Endothelial cell of umbilical vein (primary cell): ENCODE measurements at regions of chr20 and their contacts with region 1.

Region 1: DNA sequence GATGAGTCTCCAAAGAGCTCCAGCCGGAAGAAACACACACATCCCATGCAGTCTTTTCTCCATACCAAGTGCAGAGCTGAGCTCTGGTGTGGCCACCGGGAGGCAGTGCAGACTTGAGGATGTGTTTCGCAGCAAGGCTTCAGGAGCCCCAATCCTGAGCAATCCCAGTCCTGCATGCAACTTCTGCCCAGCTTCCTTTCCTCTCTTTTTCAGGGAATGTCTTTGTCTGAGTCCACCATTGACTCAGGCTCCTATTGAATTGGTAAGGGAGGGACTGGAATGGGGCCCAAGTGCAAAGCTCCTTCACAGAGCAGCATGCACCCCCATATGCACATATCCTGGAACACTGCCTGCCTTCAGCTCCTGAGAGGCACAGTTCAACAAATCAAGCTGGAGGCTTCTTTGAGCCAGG is 50.5 kb upstream of the ASIP start:
- DNase-seq: peak; percentile 82
- H3K4me3 ChIP-seq: no peak overlapping the region
- H3K27ac ChIP-seq: no peak overlapping the region
- H3K4me1 ChIP-seq: no peaks in the 10 kb centered on the region
- H3K27me3 ChIP-seq: peaks cover 37 to 44% of the 10 kb centered on the region in 2 experiments
- CTCF ChIP-seq: peak; percentile 86 to 88
- POLR2A ChIP-seq: no peak

Region 2: GRCh38 chr20:34010405-34010931 is 180.2 kb before region 1 on chr20:
- CTCF ChIA-PET with region 1: no interaction called
- POLR2A ChIA-PET with region 1: no interaction called
- dilution Hi-C with region 1: no loop called
- intact Hi-C with region 1: no loop called
- DNase-seq: no peak
- H3K4me3 ChIP-seq: no peak overlapping the region
- H3K27ac ChIP-seq: no peak overlapping the region
- H3K4me1 ChIP-seq: peaks cover 3% of the 10 kb centered on the region
- H3K27me3 ChIP-seq: no peaks in the 10 kb centered on the region
- CTCF ChIP-seq: no peak
- POLR2A ChIP-seq: no peak

Region 3: GRCh38 chr20:34246126-34246626 is 55.5 kb after region 1 on chr20:
- CTCF ChIA-PET with region 1: interaction called, 10 read pairs
- POLR2A ChIA-PET with region 1: no interaction called
- dilution Hi-C with region 1: no loop called
- intact Hi-C with region 1: no loop called
- DNase-seq: no peak
- H3K4me3 ChIP-seq: no peak overlapping the region
- H3K27ac ChIP-seq: no peak overlapping the region
- H3K4me1 ChIP-seq: no peaks in the 10 kb centered on the region
- H3K27me3 ChIP-seq: peaks cover 12 to 13% of the 10 kb centered on the region in 2 experiments
- CTCF ChIP-seq: no peak
- POLR2A ChIP-seq: no peak

Region 4: DNA sequence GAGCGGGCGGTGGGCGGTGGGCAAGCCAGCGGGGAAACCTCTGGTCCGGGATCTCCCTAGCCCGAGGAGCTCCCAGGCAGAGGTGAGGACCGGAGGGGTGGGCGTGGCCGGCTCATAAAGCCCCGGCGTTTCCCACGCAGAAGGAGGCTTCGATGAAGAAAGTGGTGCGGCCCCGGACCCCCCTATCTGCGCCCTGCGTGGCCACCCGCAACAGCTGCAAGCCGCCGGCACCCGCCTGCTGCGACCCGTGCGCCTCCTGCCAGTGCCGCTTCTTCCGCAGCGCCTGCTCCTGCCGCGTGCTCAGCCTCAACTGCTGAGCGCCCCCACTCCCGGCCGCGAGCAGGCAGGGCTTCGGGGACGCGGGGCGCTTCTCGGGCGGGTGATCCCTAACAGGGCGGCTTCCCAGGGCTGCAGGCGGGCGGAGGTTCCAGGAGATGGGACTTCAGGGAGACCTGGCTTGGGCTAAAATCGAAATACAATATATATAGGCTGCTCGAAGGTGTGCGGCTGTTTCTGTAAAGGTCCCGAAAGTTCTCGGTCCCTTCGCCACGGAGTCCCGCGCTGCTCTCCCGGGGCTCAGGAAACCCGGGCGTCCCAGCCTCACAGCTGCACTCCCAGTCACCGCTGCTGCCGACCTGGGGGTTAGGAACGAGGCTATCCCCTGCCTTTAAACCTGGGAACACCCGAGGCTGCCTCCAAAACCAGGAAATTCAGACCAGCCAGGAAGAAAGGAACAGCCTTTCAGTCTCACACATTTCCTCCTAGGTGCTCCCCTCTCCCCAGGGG is 78.4 kb after region 1 on chr20:
- CTCF ChIA-PET with region 1: interaction called, 19 read pairs
- POLR2A ChIA-PET with region 1: no interaction called
- dilution Hi-C with region 1: no loop called
- intact Hi-C with region 1: loop called (anchors 1 kb)
- DNase-seq: peak; percentile 39
- H3K4me3 ChIP-seq: peak overlapping the region; percentile 26 to 51 (median 28)
- H3K27ac ChIP-seq: no peak overlapping the region
- H3K4me1 ChIP-seq: peaks cover 5% of the 10 kb centered on the region
- H3K27me3 ChIP-seq: no peaks in the 10 kb centered on the region
- CTCF ChIP-seq: no peak
- POLR2A ChIP-seq: no peak

Region 5: GRCh38 chr20:34302723-34303528 is 112.2 kb after region 1 on chr20 and contains the start of gene AHCY:
- CTCF ChIA-PET with region 1: interaction called, 18 read pairs
- POLR2A ChIA-PET with region 1: no interaction called
- dilution Hi-C with region 1: no loop called
- intact Hi-C with region 1: loop called (anchors 2 kb)
- DNase-seq: peak; percentile 96
- H3K4me3 ChIP-seq: peak within 1 kb of the TSS; percentile 84 to 94 (median 85)
- H3K27ac ChIP-seq: peak within 1 kb of the TSS; percentile 83
- H3K4me1 ChIP-seq: peaks cover 8% of the 10 kb centered on the region
- H3K27me3 ChIP-seq: no peaks in the 10 kb centered on the region
- CTCF ChIP-seq: no peak
- POLR2A ChIP-seq: peak; percentile 74
- total RNA-seq, gene AHCY: 94.7 and 101 TPM in 2 replicates